Activated CD4-positive, alpha-beta T cell treated with anti-CD3 and anti-CD28 coated beads, Interleukin-2, amount 10 ng/mL, durations not matched to agents 24 days and 14 days (primary cell): ENCODE measurements at regions of chr18 and their contacts with region 1.

Region 1: DNA sequence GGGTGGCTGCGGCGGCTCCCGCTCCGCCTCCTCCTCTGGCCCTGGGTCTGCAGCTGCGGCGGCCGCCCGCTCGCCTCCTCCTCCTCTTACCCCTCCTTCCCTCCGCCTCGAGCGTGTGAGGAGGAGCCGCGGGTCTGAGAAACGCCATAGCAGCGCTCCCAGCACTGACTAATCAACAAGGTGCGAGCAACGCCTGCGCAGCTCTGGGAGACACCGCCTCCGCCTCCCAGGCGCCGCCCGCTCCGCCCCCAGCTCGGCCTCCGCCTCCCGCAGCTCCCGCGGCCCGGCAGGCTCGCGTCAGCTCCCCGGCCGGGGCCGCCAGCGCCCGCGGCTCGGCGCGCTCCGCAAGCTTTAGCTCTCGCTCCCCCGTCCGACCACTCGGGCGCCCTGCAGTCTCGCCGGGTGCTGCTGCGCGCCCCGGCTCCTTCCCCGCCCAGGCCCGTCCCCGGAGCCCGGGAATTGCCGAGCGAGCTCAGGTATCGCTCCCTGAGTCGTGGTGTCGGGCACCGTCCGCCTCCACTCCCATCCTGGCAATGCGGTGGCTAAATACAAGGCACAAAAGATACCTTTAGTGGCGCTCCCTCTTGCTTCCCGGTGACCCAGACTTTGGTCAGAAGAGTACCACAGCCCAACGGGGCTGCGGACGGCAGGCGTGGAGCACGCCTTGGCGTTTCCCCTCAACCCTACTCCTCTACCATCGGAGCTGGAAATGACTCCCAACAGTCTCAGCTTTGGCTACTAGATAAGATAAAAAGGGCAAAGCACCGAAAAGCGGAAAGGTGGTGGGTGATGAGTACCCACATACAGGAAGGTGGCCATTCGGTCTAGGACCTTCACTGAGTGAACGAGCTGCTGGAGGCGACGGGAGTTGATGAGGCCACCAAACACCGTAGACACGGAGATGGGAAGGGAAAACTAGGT is at the start of gene GAREM1:
- DNase-seq: peak; percentile 95
- H3K4me3 Mint-ChIP-seq: peak within 1 kb of the TSS; percentile 78
- H3K27ac Mint-ChIP-seq: no peak within 1 kb of the TSS
- H3K4me1 Mint-ChIP-seq: peaks cover 16% of the 10 kb centered on the region
- H3K27me3 Mint-ChIP-seq: peaks cover 60% of the 10 kb centered on the region
- total RNA-seq, gene GAREM1: not detected in 2 replicates

Region 2: GRCh38 chr18:32158108-32158624 is 312.8 kb before region 1 on chr18:
- intact Hi-C with region 1: loop called (anchors 2 kb)
- DNase-seq: peak; percentile 90
- H3K4me3 Mint-ChIP-seq: peak overlapping the region; percentile 75
- H3K27ac Mint-ChIP-seq: no peak overlapping the region
- H3K4me1 Mint-ChIP-seq: peaks cover 9% of the 10 kb centered on the region
- H3K27me3 Mint-ChIP-seq: peaks cover 6% of the 10 kb centered on the region

Region 3: DNA sequence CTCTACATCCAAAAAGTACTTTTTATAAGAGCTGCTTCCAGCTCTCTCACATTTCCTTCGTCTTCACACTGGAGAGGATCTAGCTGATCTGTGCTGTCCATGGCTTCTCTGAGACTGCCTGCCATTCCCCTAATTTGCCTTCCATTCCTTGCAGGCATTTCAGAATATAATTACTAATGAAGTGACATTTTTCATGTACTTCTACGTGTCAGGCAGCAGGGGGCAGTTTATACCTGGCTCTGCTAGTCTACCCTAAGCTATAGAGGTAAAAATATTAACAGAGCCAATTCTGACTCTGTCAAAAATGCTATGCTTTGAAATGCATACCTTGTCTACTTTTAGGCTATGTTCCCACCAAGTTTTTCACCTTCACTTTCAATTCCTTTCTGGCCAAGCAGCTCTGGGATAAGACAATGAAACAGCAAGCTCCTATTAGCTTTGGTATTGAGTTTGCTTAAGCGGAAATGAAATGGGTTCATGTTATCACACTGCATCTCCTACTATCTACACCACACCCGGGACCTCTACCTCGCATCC is 199.2 kb before region 1 on chr18:
- intact Hi-C with region 1: loop called (anchors 5 kb)
- DNase-seq: peak; percentile 60
- H3K4me3 Mint-ChIP-seq: no peak overlapping the region
- H3K27ac Mint-ChIP-seq: no peak overlapping the region
- H3K4me1 Mint-ChIP-seq: no peaks in the 10 kb centered on the region
- H3K27me3 Mint-ChIP-seq: peaks cover 5% of the 10 kb centered on the region

Region 4: DNA sequence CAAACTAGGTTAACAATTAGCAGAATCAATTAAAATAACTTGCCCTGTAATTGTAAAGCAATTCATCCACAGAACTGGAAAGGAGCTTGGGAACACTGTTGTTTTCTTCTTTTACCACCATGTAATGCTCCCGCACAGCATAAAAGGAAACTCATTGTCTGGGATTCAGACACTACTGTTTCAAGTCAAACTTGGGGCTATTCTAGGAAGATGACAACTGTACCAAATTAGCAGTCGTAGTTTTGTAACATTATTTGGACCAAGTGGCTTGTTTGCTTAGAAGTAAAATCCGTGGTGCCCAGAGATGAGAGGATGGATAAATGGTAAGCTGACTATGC is 10.6 kb before region 1 on chr18:
- intact Hi-C with region 1: no loop called
- DNase-seq: no peak
- H3K4me3 Mint-ChIP-seq: no peak overlapping the region
- H3K27ac Mint-ChIP-seq: no peak overlapping the region
- H3K4me1 Mint-ChIP-seq: no peaks in the 10 kb centered on the region
- H3K27me3 Mint-ChIP-seq: peaks cover 29% of the 10 kb centered on the region

Region 5: GRCh38 chr18:32530947-32531651 is 60.1 kb after region 1 on chr18:
- intact Hi-C with region 1: loop called (anchors 1 kb)
- DNase-seq: peak; percentile 70
- H3K4me3 Mint-ChIP-seq: no peak overlapping the region
- H3K27ac Mint-ChIP-seq: no peak overlapping the region
- H3K4me1 Mint-ChIP-seq: peaks cover 7% of the 10 kb centered on the region
- H3K27me3 Mint-ChIP-seq: peaks cover 21% of the 10 kb centered on the region